Aorta (tissue), 5 donors: ENCODE measurements at regions of chr17 and their contacts with region 1.

Region 1: GRCh38 chr17:8611619-8612298 is 18.8 kb downstream of the MYH10 start:
- DNase-seq: no peak
- ATAC-seq: no peak
- H3K4me3 ChIP-seq: peak overlapping the region; percentile 26 to 59
- H3K27ac ChIP-seq: peak overlapping the region; percentile 95
- H3K4me1 ChIP-seq: peaks cover 2 to 6% of the 10 kb centered on the region in 2 donors
- H3K27me3 ChIP-seq: no peaks in the 10 kb centered on the region

Region 2: DNA sequence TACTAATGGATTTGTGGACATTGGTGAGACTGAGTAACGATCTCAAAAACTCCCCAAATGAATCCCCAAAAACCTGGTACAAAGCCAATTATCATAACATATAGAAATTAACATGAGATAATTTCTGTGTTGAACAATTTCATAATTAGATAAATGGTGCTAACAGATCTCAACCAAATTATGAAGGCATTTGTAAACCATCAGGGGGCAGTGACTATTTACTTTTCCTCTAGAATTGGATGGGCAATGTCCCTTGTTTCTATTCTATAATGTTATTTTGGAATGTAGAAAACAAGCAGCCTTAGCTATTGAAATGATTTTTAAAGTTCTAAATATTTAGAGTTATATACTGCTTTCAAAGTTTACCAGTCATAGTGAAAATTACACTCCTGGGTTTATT is 39.0 kb before region 1 on chr17:
- intact Hi-C with region 1: loop called in 1 of 2 experiments (anchors 5 kb)
- DNase-seq: no peak
- ATAC-seq: no peak
- H3K4me3 ChIP-seq: no peak overlapping the region
- H3K27ac ChIP-seq: no peak overlapping the region
- H3K4me1 ChIP-seq: peaks cover 0 to 7% of the 10 kb centered on the region in 2 donors
- H3K27me3 ChIP-seq: no peaks in the 10 kb centered on the region

Region 3: GRCh38 chr17:8740486-8740885 is 128.7 kb after region 1 on chr17:
- intact Hi-C with region 1: loop called in 1 of 2 experiments (anchors 5 kb)
- DNase-seq: no peak
- ATAC-seq: no peak
- H3K4me3 ChIP-seq: no peak overlapping the region
- H3K27ac ChIP-seq: no peak overlapping the region
- H3K4me1 ChIP-seq: no peaks in the 10 kb centered on the region
- H3K27me3 ChIP-seq: no peaks in the 10 kb centered on the region